MCF 10A (cell line): ENCODE measurements at regions of chrX and their contacts with region 1.

Region 1: DNA sequence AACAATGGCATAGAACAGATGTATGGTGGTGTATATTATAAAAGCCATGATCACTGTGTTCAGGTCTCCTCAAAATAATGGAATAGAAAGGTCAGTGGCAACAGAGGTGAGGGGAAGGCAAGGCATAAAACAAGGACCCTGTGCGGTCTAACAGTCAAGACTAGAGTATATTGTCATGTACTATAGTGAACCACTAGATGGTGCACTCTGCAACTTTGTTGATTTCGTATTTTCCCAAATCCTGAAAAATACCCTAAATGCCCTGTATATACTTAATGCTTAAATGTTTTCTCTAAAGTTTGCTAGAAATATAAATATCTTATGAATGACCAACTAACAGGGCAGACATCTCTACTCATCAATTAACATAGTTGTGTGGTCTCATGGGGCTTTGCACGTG is 453.0 kb downstream of the PCDH11X start:
- DNase-seq: peak; percentile 31
- H3K4me3 Mint-ChIP-seq: no peak overlapping the region
- H3K27ac Mint-ChIP-seq: no peak overlapping the region
- H3K4me1 Mint-ChIP-seq: no peaks in the 10 kb centered on the region
- H3K27me3 Mint-ChIP-seq: peaks cover 12% of the 10 kb centered on the region
- CTCF ChIP-seq: peak; percentile 55

Region 2: GRCh38 chrX:92213781-92214180 is 18.4 kb before region 1 on chrX:
- CTCF ChIA-PET with region 1: no interaction called
- POLR2A ChIA-PET with region 1: no interaction called
- intact Hi-C with region 1: no loop called
- DNase-seq: peak; percentile 67
- H3K4me3 Mint-ChIP-seq: no peak overlapping the region
- H3K27ac Mint-ChIP-seq: no peak overlapping the region
- H3K4me1 Mint-ChIP-seq: peaks cover 4% of the 10 kb centered on the region
- H3K27me3 Mint-ChIP-seq: peaks cover 12% of the 10 kb centered on the region
- CTCF ChIP-seq: no peak

Region 3: DNA sequence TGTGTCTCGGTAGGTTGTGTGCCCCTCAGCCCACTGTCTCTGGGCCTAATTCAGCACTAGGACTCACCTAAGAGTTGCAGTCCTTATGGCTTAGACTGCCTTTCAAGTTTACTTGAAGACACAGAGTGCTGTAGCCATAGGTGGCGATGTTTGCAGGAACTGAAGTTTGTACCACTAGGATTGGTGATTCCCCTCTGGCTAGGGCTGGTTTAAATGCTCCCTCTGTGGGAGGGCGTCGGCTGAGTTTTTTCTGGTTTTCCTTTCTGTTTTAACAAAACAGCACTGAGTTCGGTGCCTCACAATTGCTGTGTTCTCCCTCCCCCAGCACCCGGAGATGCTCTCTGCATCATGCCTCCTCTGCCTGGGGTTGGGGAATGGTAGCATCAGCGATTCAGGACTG is 27.9 kb after region 1 on chrX:
- CTCF ChIA-PET with region 1: no interaction called
- POLR2A ChIA-PET with region 1: no interaction called
- intact Hi-C with region 1: no loop called
- DNase-seq: no peak
- H3K4me3 Mint-ChIP-seq: no peak overlapping the region
- H3K27ac Mint-ChIP-seq: no peak overlapping the region
- H3K4me1 Mint-ChIP-seq: no peaks in the 10 kb centered on the region
- H3K27me3 Mint-ChIP-seq: peaks cover 11% of the 10 kb centered on the region
- CTCF ChIP-seq: no peak

Region 4: DNA sequence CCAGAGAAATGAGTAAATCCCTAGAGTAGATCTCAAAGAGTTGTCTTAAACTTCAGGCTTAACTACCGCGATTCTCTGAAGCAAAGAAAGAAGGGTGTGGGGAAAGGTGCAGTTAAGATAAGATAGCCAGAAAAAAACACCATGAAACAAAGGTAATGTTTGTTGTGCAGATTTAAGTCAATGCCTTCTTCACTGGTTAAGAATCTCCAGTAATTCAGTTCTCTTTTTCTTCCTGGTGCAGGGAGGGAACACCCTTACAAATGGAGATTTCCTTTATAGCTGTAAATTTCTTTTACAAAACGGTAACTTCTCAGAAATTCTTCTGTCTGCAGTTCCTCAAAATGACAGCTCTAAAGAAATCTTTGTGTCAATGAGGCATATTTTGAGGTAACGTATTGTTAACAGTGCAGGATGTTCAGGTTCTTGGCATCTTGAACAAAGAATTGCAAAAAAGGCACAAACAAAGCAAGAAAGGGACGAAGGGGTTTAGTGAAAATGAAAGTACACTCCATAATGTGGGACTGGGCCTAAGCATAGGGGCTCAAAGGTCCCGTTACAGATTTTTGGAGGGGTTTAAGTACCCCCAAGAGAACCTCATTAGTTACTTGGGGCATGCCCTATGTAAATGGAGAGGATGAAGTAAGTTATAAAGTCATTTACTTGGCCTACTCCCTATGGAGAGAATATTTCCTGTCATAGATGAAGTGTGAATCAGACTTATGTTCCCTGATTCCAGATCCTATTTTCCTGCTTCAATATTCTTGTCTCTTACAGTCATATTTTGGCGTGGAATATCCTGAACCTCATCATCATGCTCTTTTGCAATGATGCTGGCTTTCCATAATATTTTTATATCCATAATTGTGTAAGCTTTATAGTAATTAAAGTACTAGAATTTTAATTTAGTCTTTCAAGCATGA is 39.0 kb after region 1 on chrX:
- CTCF ChIA-PET with region 1: no interaction called
- POLR2A ChIA-PET with region 1: no interaction called
- intact Hi-C with region 1: no loop called
- DNase-seq: no peak
- H3K4me3 Mint-ChIP-seq: peak overlapping the region; percentile 41
- H3K27ac Mint-ChIP-seq: peak overlapping the region; percentile 74
- H3K4me1 Mint-ChIP-seq: peaks cover 16% of the 10 kb centered on the region
- H3K27me3 Mint-ChIP-seq: peaks cover 28% of the 10 kb centered on the region
- CTCF ChIP-seq: no peak

Region 5: GRCh38 chrX:93422693-93423092 is 1190.5 kb after region 1 on chrX:
- CTCF ChIA-PET with region 1: interaction called, 7 read pairs
- POLR2A ChIA-PET with region 1: no interaction called
- intact Hi-C with region 1: loop called (anchors 5 kb)
- DNase-seq: peak; percentile 68
- H3K4me3 Mint-ChIP-seq: no peak overlapping the region
- H3K27ac Mint-ChIP-seq: no peak overlapping the region
- H3K4me1 Mint-ChIP-seq: peaks cover 9% of the 10 kb centered on the region
- H3K27me3 Mint-ChIP-seq: peaks cover 33% of the 10 kb centered on the region
- CTCF ChIP-seq: peak; percentile 57

Region 6: DNA sequence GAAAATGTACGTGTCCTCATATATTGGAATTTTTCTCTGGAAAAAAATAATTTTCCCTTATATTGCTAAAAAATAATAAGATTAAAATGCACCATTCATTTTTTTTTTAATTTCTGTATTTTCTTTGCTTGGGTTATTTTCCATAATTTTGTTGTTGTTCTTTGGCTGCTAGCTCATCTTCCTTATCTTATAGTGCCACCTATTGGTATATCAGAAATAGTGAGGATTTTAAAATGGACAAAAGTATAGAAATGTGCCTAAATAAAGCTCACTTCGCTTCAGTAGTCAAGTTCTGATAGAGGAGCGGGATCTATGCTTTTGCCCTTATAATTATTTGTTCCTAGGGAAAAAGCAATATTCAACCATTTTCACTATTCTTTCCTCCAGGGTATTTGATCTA is 1306.4 kb after region 1 on chrX:
- CTCF ChIA-PET with region 1: interaction called, 6 read pairs
- POLR2A ChIA-PET with region 1: no interaction called
- intact Hi-C with region 1: loop called (anchors 2 kb)
- DNase-seq: peak; percentile 17
- H3K4me3 Mint-ChIP-seq: no peak overlapping the region
- H3K27ac Mint-ChIP-seq: no peak overlapping the region
- H3K4me1 Mint-ChIP-seq: no peaks in the 10 kb centered on the region
- H3K27me3 Mint-ChIP-seq: no peaks in the 10 kb centered on the region
- CTCF ChIP-seq: peak; percentile 51